ENCODE measurements at regions of chr4 and their contacts with region 1.

Region 1: GRCh38 chr4:6873792-6874461 is 35.7 kb upstream of the TBC1D14 start:
- DNase-seq: no peak
- H3K4me3 ChIP-seq: no peak overlapping the region
- H3K27ac ChIP-seq: no peak overlapping the region
- H3K4me1 ChIP-seq: peaks cover 6 to 62% (median 9%) of the 10 kb centered on the region in 3 donors
- H3K27me3 ChIP-seq: no peaks in the 10 kb centered on the region
- CTCF ChIP-seq: peak; percentile 46 to 87 (median 81)
- POLR2A ChIP-seq: no peak

Region 2: DNA sequence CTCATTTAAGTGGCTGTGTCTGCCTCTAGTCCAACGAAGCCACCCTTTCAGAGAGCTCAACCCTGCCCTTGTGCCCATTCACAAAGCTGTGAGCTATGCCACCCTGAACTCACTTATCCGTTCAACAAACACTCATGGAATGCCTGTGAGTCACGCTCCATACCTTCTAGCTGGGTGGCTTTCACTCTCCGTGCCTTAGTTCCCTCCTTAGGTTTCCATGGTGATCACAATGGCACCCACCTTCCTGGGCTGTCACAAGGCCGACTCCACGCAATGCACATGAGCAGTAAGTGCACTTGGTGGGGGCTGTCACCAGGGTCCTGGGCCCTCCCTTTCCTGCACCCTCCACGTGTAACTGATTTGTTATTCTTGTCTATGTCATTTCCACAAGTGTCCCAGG is 364.3 kb before region 1 on chr4:
- intact Hi-C with region 1: no loop called
- DNase-seq: no peak
- H3K4me3 ChIP-seq: no peak overlapping the region
- H3K27ac ChIP-seq: no peak overlapping the region
- H3K4me1 ChIP-seq: no peaks in the 10 kb centered on the region
- H3K27me3 ChIP-seq: peaks cover 0 to 8% (median 0%) of the 10 kb centered on the region in 4 donors
- CTCF ChIP-seq: no peak
- POLR2A ChIP-seq: no peak

Region 3: DNA sequence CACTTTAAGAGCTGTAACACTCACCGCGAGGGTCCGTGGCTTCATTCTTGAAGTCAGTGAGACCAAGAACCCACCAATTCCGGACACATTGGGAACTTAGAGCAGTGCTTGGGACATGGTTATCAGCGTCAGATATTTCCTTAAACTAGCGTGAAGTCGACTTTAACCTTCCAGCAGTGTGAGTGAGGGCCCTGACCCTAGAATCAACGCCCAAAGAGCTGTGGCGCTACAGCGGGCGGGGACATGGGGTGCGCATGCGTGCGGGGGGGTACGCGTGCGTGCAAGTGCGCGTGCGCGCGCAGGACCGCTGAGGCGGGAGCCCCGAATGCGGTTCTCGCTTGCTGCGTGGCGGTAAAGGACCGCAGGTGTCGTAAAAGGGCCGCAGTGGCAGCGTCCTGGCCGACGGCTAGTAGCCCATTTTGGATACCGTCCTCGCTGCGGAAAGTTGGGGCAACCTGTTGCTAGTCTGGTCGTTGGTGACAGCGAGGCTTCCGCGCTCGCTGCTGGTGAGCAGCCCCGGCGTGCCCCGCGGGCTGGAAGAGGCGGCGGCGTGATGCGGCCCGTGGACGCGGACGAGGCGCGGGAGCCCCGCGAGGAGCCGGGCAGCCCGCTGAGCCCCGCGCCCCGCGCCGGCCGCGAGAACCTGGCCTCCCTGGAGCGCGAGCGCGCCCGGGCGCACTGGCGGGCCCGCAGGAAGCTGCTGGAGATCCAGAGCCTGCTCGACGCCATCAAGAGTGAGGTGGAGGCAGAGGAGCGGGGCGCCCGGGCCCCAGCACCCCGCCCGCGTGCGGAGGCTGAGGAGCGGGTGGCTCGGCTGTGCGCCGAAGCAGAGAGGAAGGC is 200.0 kb before region 1 on chr4:
- intact Hi-C with region 1: no loop called
- DNase-seq: peak; percentile 69
- H3K4me3 ChIP-seq: peak overlapping the region; percentile 58 to 89 (median 78)
- H3K27ac ChIP-seq: peak overlapping the region; percentile 75 to 95 (median 84)
- H3K4me1 ChIP-seq: peaks cover 22 to 59% (median 26%) of the 10 kb centered on the region in 3 donors
- H3K27me3 ChIP-seq: no peaks in the 10 kb centered on the region
- CTCF ChIP-seq: peak in 1 of 6 experiments; percentile 53
- POLR2A ChIP-seq: peak in 3 of 4 donors; percentile 43 to 72 (median 52)

Region 4: GRCh38 chr4:6720202-6720699 is 153.7 kb before region 1 on chr4:
- intact Hi-C with region 1: loop called (anchors 5 kb)
- DNase-seq: no peak
- H3K4me3 ChIP-seq: no peak overlapping the region
- H3K27ac ChIP-seq: no peak overlapping the region
- H3K4me1 ChIP-seq: peaks cover 11 to 47% (median 27%) of the 10 kb centered on the region in 3 donors
- H3K27me3 ChIP-seq: no peaks in the 10 kb centered on the region
- CTCF ChIP-seq: peak; percentile 87 to 97 (median 93)
- POLR2A ChIP-seq: no peak

Region 5: DNA sequence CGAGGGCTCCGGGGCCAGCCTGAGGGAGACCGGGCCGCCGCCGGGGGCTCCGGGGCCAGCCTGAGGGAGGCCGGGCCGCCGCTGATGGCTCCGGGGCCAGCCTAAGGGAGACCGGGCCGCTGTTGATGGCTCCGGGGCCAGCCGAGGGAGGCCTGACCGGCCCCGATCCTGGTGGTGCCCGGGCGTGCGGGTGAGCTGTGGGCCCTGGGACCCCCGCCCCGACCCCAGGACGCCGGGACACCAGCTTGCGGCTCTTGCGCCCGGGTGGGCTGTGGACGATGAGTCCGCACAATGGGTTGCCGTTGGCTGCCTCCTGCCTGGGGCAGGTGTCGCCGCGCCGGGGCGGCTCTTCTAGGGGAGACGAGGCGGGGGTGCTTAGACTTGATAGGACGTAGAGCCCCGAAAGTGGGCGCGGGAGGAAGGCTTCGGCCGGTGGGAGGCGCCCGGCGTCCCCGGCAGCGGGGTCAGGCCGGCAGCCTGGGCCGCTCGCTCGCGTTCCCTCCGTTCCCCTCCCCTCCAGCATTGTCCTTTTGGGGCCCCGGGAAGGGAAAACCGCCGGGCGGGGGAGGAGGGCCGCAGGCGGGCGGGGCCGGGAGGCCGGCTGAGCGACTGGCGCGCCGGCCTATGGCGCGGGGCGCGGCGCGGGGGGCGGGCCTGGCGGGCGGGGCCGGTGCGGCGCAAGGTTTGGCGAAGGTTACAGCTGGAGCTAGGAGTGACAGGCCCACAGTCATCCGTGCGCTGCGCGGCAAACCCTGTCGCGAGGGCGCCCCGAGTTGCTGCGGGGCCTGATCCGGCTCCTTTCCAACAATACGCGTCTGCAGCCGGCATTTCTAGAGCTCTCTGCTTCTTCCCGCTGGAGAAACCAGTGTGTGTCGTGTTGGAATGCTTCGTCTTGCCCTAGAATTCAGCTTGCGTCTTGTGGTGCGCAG is 90.6 kb before region 1 on chr4:
- intact Hi-C with region 1: loop called (anchors 5 kb)
- DNase-seq: no peak
- H3K4me3 ChIP-seq: peak overlapping the region; percentile 96 to 100 (median 98)
- H3K27ac ChIP-seq: peak overlapping the region; percentile 100
- H3K4me1 ChIP-seq: peaks cover 6 to 57% (median 20%) of the 10 kb centered on the region in 3 donors
- H3K27me3 ChIP-seq: no peaks in the 10 kb centered on the region
- CTCF ChIP-seq: peak in 1 of 6 experiments; percentile 7
- POLR2A ChIP-seq: peak in 2 of 4 donors; percentile 78 to 81

Region 6: GRCh38 chr4:7411896-7412553 is 538.1 kb after region 1 on chr4:
- intact Hi-C with region 1: no loop called
- DNase-seq: no peak
- H3K4me3 ChIP-seq: no peak overlapping the region
- H3K27ac ChIP-seq: no peak overlapping the region
- H3K4me1 ChIP-seq: no peaks in the 10 kb centered on the region
- H3K27me3 ChIP-seq: peaks cover 0 to 10% (median 0%) of the 10 kb centered on the region in 4 donors
- CTCF ChIP-seq: no peak
- POLR2A ChIP-seq: no peak

Measured in esophagus squamous epithelium (tissue), 5 donors.